ENCODE measurements at regions of chr15 and their contacts with region 1.

Region 1: GRCh38 chr15:82999905-83000671 is 11.4 kb downstream of the C15orf40 start:
- DNase-seq: peak in 1 of 2 experiments; percentile 43
- H3K4me3 ChIP-seq: no peak overlapping the region
- H3K27ac ChIP-seq: no peak overlapping the region
- H3K4me1 ChIP-seq: peaks cover 0 to 2% (median 0%) of the 10 kb centered on the region in 4 experiments; a peak in 1 of 7 replicates
- H3K27me3 ChIP-seq: no peaks in the 10 kb centered on the region
- CTCF ChIP-seq: peak in 2 of 3 experiments; percentile 37 to 49; a peak in 2 of 4 replicates
- EP300 ChIP-seq: no peak
- POLR2A ChIP-seq: no peak
- RAD21 ChIP-seq: peak; percentile 82 to 83

Region 2: GRCh38 chr15:82849556-82850512 is 150.3 kb before region 1 on chr15:
- CTCF ChIA-PET with region 1: interaction called, 27 read pairs
- POLR2A ChIA-PET with region 1: no interaction called
- DNase-seq: peak; percentile 81 to 83
- H3K4me3 ChIP-seq: no peak overlapping the region
- H3K27ac ChIP-seq: peak overlapping the region; percentile 29; the same call in 1 of the 2 replicates
- H3K4me1 ChIP-seq: peaks cover 0 to 7% (median 3%) of the 10 kb centered on the region in 4 experiments; a peak in 5 of 7 replicates
- H3K27me3 ChIP-seq: no peaks in the 10 kb centered on the region
- CTCF ChIP-seq: peak; percentile 75 to 97 (median 91)
- EP300 ChIP-seq: no peak
- POLR2A ChIP-seq: 0 out of 3 replicates have a peak, but pooled peaks of 1 of the 2 experiments have one; percentile 40
- RAD21 ChIP-seq: peak; percentile 93 to 94

Region 3: GRCh38 chr15:82985688-82986441 is 14.2 kb before region 1 on chr15 and contains the start of gene RAMAC:
- CTCF ChIA-PET with region 1: interaction called, 12 read pairs
- POLR2A ChIA-PET with region 1: interaction called, 9 read pairs
- DNase-seq: peak; percentile 57 to 86
- H3K4me3 ChIP-seq: peak within 1 kb of the TSS; percentile 88 to 96 (median 94)
- H3K27ac ChIP-seq: peak within 1 kb of the TSS; percentile 48; the same call in 1 of the 2 replicates
- H3K4me1 ChIP-seq: peaks cover 0 to 3% (median 3%) of the 10 kb centered on the region in 4 experiments; a peak in 3 of 7 replicates
- H3K27me3 ChIP-seq: peaks cover 0 to 6% (median 5%) of the 10 kb centered on the region in 4 experiments; a peak in 6 of 7 replicates
- CTCF ChIP-seq: no peak
- EP300 ChIP-seq: no peak
- POLR2A ChIP-seq: peak; percentile 11 to 72
- RAD21 ChIP-seq: no peak
- total RNA-seq, gene RAMAC: 32.9 and 33.5 TPM in 2 replicates

Region 4: DNA sequence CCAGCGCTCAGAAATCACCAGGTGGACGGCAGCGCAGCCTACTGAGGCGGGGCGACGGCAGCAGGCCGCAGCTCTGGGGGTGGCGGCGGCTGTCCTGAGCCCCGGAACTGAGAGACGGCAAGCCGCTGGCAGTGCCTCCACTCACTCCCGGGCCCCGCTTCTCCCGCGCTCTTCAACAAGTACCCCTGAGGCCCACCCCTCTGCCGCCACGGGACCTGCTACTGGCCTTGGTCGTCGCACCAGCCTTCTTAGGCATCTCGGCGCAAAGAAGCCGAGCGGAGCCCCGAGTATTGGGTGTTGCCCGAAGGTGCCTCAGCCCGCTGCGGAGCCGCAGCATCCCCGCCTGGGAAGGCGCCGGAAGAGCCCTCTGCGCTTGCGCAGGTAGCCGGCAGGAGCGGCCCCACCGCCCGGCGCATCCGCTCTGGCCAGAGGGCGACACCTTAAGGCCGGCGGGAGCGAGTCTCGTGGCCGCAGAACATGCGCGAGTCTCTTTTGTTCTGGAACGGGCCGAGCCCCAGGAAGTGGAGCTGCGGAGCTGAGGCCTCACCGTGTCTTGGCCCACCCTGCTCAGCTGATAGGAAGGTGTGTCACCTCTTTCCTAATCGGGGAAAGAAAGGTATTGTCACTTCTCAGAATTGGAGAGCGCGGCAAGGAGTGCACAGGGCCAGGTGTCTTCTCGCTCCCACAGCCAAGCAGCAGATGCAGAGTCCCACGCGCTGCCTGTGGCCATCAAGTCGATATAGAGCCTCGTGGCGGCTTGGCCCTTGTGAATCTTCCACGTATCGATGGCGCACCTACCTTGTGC is 11.4 kb after region 1 on chr15 and contains the start of gene C15orf40:
- CTCF ChIA-PET with region 1: interaction called, 16 read pairs
- POLR2A ChIA-PET with region 1: interaction called, 5 read pairs
- DNase-seq: peak; percentile 79 to 85
- H3K4me3 ChIP-seq: peak within 1 kb of the TSS; percentile 69 to 97 (median 92)
- H3K27ac ChIP-seq: peak within 1 kb of the TSS; percentile 51; the same call in 1 of the 2 replicates
- H3K4me1 ChIP-seq: peaks cover 3 to 10% (median 7%) of the 10 kb centered on the region in 4 experiments
- H3K27me3 ChIP-seq: peaks cover 0 to 3% (median 0%) of the 10 kb centered on the region in 4 experiments; a peak in 1 of 7 replicates
- CTCF ChIP-seq: peak; percentile 72 to 83 (median 79)
- EP300 ChIP-seq: no peak
- POLR2A ChIP-seq: peak in 1 of 2 experiments; percentile 87; a peak in 2 of 3 replicates
- RAD21 ChIP-seq: peak; percentile 47 to 62; a peak in 3 of 4 replicates
- total RNA-seq, gene C15orf40: 10.7 and 21.8 TPM in 2 replicates